ENCODE measurements at regions of chr13 and their contacts with region 1.

Region 1: DNA sequence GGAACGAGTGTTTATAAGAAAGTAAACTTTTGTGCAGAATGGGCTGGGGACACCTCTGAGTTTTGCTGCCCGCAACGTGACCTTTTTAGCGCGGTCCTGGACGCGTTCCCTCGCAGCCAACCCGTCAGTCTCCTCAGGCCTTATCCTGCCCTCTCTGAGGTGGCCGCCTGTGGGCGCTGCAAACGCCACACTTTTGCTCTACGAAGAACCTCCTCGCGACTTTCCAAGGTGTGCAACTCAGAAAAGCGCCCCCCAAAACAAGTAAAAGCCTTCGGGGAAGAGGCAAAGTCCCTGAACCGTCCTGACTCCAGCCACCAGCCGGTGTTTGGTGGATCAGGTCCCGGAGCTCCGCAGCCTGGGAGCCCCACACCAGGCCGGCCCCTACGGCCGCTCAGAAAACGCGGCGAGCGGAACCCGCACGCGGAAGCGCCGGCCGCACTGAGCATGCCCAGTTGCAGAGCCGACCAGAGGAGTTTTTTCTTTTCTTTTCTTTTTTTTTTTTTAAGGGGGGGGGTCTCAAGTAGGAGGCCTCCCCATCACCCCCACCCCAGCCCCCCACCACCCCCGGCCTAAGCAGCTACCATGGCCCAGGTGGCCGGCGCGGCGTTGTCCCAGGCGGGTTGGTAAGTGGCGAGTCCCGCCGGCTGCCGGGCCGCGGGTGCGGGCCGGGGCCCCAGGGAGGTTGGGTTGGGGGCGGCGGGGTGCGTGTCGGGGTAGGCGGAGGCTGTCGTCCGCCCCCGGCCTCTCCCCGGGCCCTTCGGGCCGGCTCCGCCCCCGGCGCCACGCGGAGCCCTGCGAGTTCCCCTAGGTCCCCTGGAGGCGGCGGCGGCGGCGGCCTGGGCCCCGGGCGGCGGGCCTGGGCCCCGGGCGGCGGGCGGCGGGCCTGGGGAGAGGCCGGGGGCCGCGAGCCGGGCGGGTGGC is at the start of gene TDRD3:
- DNase-seq: peak; percentile 73 to 96 (median 78)

Region 2: DNA sequence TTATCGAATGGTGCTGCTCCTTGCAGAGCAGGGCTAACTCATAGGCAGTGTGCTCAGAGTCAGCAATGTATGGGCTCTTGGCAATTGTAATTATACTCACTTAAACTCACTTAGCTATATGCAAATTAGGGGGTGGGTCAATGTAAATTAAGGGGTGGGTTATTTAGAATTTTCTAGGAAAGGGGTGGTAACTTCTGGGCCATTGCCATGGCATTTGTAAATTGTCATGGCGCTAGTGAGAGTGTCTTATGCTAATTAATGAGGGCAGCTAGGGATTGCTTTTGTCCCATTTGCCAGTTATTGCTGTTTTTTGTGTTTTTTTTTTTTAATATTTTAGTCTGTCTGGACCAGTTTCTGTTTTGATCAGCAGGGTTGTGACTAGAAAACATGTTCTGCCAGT is 301.7 kb before region 1 on chr13:
- intact Hi-C with region 1: no loop called
- DNase-seq: no peak

Region 3: DNA sequence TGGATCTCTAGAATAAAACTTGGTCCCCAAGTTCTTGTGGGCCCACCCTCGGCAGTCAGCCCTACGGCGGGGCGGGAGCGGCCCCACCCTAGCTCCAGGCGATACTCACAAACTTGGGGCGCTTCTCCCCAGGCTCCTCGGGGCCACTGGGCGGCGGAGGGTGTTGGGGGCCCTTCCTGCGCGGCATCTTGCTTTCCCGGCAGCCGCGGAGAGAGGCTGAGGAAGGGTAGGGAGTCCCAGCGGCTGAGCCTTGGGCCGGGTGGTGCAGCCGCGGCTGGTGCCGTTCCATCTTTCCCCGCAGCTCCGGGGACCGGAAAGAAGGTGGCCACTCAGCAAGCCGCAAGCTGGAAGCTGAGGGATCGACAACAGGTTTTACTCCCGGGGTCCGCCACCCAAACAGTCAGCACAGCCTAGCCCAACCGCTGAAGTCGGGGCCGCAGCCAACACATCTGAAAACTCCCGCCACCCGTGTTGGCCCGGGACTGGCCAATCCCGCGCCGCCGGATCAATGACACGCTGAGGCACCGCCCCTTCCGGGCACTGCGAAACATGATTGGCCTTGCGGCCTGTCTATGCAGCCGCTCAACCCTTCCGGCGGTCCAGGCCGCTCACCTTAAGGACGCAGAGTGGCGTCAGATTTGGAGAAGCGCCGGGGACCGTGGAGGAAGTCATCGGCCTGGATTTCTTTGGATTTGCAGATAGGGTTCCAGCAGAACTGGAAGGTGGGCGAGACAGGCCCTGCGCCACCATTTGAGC is 233.4 kb before region 1 on chr13 and contains the start of gene DIAPH3:
- intact Hi-C with region 1: loop called (anchors 10 kb)
- DNase-seq: peak; percentile 93 to 100 (median 98)

Region 4: GRCh38 chr13:60282186-60282585 is 114.9 kb before region 1 on chr13:
- intact Hi-C with region 1: no loop called
- DNase-seq: no peak

Region 5: DNA sequence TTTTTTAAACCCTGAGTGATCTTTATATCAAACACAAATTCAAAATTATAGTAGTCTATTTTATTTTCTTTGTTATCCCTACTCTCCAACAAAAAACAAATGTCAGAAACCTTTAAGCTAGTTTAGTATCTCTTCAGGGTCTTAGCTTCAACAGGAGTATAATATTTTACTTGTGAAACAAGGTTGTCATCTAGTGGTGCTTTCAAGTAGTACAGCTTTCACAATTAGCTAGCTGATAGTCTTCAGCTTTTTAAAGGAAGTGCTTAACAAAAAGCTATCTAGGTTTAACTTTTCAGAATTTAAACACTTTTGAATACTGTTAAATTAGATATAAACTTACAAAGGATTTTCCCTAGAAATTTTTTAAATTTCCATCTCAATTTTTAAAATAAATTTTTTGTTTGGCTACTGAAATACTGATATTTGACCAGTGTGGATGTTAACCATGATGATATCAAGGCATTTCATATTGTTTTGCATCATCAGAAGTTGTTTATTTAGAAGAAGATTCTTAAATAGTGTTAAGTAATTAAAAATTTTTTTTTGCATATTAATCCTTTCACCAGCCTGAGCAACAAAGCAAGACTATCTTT is 34.2 kb after region 1 on chr13:
- intact Hi-C with region 1: loop called (anchors 5 kb)
- DNase-seq: no peak